ENCODE measurements at regions of chr1 and their contacts with region 1.

Region 1: GRCh38 chr1:154546264-154547063 is 12.0 kb downstream of the UBE2Q1 start:
- DNase-seq: peak; percentile 79
- ATAC-seq: peak; percentile 94
- H3K4me3 Mint-ChIP-seq: no peak overlapping the region
- H3K27ac Mint-ChIP-seq: no peak overlapping the region
- H3K4me1 Mint-ChIP-seq: peaks cover 9% of the 10 kb centered on the region
- H3K27me3 Mint-ChIP-seq: peaks cover 2% of the 10 kb centered on the region

Region 2: GRCh38 chr1:154206196-154206595 is 340.3 kb before region 1 on chr1 and contains the start of gene CFAP141:
- CTCF ChIA-PET with region 1: no interaction called
- POLR2A ChIA-PET with region 1: no interaction called
- intact Hi-C with region 1: loop called in 1 of 2 experiments (anchors 5 kb)
- DNase-seq: peak; percentile 40
- ATAC-seq: peak; percentile 89
- H3K4me3 Mint-ChIP-seq: no peak within 1 kb of the TSS
- H3K27ac Mint-ChIP-seq: peak within 1 kb of the TSS; percentile 72
- H3K4me1 Mint-ChIP-seq: peaks cover 45% of the 10 kb centered on the region
- H3K27me3 Mint-ChIP-seq: no peaks in the 10 kb centered on the region
- total RNA-seq, gene CFAP141: not detected

Region 3: GRCh38 chr1:154324669-154325582 is 221.5 kb before region 1 on chr1 and contains the start of gene ATP8B2:
- CTCF ChIA-PET with region 1: interaction called, 6 read pairs
- POLR2A ChIA-PET with region 1: no interaction called
- intact Hi-C with region 1: loop called in 1 of 2 experiments (anchors 2 kb)
- DNase-seq: peak; percentile 92
- ATAC-seq: peak; percentile 70
- H3K4me3 Mint-ChIP-seq: peak within 1 kb of the TSS; percentile 99
- H3K27ac Mint-ChIP-seq: peak within 1 kb of the TSS; percentile 94
- H3K4me1 Mint-ChIP-seq: peaks cover 39% of the 10 kb centered on the region
- H3K27me3 Mint-ChIP-seq: no peaks in the 10 kb centered on the region
- total RNA-seq, gene ATP8B2: 48.2 TPM

Region 4: GRCh38 chr1:154352581-154353459 is 193.6 kb before region 1 on chr1:
- CTCF ChIA-PET with region 1: interaction called, 3 read pairs
- POLR2A ChIA-PET with region 1: no interaction called
- intact Hi-C with region 1: loop called (anchors 10 kb)
- DNase-seq: peak; percentile 80
- ATAC-seq: peak; percentile 84
- H3K4me3 Mint-ChIP-seq: peak overlapping the region; percentile 72
- H3K27ac Mint-ChIP-seq: peak overlapping the region; percentile 81
- H3K4me1 Mint-ChIP-seq: peaks cover 32% of the 10 kb centered on the region
- H3K27me3 Mint-ChIP-seq: no peaks in the 10 kb centered on the region

Region 5: GRCh38 chr1:154493276-154493675 is 53.2 kb before region 1 on chr1:
- CTCF ChIA-PET with region 1: interaction called, 13 read pairs
- POLR2A ChIA-PET with region 1: no interaction called
- intact Hi-C with region 1: no loop called
- DNase-seq: no peak
- ATAC-seq: no peak
- H3K4me3 Mint-ChIP-seq: no peak overlapping the region
- H3K27ac Mint-ChIP-seq: no peak overlapping the region
- H3K4me1 Mint-ChIP-seq: peaks cover 41% of the 10 kb centered on the region
- H3K27me3 Mint-ChIP-seq: peaks cover 4% of the 10 kb centered on the region